Sciatic nerve (tissue), 2 donors: ENCODE measurements at regions of chr1 and their contacts with region 1.

Region 1: GRCh38 chr1:157523774-157524493 is 28.4 kb downstream of the FCRL5 start:
- DNase-seq: no peak
- ATAC-seq: no peak

Region 2: GRCh38 chr1:159188375-159188788 is 1664.4 kb after region 1 on chr1:
- intact Hi-C with region 1: loop called (anchors 5 kb)
- DNase-seq: peak; percentile 71
- ATAC-seq: no peak